HEK293T (cell line): ENCODE measurements at regions of chr9 and their contacts with region 1.

Region 1: DNA sequence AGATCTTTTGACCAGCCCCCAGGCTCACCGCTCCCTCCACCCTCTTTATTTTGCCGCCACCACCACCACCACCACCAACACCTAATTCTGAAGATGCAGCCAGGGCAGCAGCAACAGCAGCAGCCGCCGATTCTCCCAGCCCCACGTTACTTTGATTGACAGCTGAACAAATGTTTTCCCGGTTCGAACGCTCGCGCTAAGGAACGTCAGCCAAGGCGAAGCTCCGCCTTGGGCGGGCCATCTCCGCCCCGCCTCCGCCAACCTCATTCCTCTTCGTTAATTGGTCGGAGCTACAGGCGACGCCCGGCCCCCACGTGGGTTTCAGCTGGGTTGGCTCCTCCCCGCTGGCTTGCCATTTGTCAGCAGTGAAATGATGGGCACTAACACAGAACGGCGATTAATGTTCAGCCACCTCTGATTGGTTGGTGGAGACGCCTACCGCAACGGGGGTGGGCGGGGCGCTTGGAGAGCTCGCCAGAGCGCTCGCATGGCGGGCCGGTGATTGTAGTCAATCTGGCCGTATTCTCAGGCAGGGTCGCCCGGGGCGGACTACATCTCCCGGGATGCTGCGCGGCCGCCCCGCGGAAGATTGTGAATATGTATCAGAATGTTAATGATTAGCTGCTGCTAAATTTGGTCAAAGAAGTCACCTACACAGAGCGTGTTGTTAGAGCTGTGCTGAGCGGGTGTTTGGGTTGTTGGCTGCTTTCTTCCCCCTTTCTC is at the start of gene TLE4:
- DNase-seq: peak; percentile 100

Region 2: DNA sequence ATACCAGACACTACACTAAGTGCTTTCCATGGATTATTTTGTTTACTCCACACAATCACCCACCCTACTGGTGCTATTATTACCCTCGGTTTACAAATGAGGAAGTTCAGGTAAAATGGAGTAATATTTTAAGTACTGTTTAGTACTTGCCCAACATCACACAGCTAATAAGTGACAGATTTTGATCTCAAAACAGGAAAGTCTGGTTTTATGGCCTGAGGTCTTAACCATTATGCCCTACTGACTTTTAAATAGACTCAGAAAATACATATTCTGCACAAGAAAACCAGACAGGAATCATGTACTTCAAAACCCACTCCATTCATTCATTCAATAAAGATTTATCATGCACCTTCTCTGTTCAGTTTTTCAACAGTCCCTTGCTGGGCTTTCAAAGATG is 430.7 kb before region 1 on chr9:
- CTCF ChIA-PET with region 1: no interaction called
- POLR2A ChIA-PET with region 1: no interaction called
- DNase-seq: no peak

Region 3: DNA sequence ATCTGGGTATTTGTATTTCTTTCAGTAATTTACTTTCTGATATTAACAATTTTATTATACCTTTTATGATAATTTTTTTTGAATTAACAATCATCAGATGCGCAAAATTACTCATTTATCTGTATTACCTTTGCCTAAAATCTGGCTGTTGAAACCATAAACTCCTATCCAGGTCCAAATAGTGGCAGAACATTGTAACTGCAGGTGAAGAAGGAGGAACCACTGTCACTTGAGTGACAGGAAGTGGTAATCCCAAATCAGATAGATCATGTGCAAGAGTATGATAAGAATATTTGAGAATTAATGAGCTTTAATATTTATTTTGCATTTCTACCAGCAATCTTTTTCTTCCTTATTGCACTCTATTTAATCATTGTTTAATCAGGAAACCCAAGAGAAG is 139.0 kb before region 1 on chr9:
- CTCF ChIA-PET with region 1: interaction called, 3 read pairs
- POLR2A ChIA-PET with region 1: interaction called, 17 read pairs
- DNase-seq: peak; percentile 64

Region 4: GRCh38 chr9:79501566-79501965 is 69.9 kb before region 1 on chr9:
- CTCF ChIA-PET with region 1: no interaction called
- POLR2A ChIA-PET with region 1: no interaction called
- DNase-seq: no peak

Region 5: DNA sequence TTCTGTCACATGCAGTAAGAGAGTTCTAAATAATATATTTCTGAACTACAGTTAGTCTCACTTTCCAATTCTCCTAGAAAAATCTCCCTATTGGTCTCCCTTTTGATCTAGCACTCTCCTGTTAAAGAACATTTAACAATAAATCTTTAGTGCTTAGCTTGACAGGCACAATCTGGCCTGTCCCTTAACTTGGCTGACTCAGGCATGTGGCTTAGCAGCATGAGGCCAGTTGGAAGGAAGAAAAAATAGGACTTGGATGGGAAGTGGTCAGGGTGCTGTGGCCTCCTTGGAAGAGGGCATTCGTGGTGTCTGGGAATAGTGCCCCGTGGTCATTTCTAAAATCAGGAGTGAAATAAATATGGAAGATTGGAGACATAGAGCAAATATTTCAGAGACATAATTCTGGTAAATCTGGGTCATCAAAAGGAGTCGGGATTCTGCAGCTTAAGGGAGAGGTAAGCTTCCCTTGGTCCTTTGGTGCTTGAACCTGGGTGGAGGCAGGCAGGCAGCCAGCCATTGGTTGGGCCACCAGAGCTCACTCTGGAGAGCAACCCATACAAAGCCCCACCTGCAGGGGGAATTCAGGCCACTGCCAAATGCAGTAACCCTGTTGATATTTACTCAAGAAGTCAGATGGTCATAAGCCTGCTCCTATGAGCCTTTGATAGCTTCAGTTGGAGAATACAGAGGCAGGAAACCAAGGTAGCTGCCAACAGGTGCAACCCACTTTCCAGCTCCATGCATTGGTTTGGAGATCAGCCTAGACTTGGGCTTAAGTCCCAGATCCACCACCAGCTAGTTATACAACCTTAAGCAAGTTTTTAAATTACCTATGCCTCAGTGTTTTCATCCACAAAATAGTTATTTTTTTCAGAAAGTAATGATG is 28.5 kb before region 1 on chr9:
- CTCF ChIA-PET with region 1: no interaction called
- POLR2A ChIA-PET with region 1: interaction called, 11 read pairs
- DNase-seq: no peak

Region 6: GRCh38 chr9:79603222-79603920 is 31.9 kb after region 1 on chr9:
- CTCF ChIA-PET with region 1: no interaction called
- POLR2A ChIA-PET with region 1: interaction called, 13 read pairs
- DNase-seq: no peak

Region 7: DNA sequence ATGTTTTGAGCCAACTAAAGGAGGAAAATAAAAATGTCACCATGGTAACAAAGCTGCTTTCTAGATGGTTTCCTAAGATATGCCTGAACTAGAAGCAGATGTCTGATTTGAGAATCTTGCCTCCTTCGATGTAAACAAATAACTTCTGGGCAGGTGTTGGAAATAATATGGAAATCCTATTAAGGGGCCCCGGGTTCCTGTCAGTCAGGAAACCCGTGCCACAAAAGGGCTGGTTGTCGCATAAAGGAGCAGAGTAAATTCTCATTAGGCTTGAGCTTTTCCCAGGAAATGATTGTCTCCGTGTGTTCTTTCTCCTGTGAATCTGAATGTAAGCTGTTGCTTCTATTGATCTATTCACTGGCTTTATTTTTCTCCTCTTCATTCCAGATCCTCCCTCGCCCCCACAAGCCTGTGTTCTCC is 91.1 kb after region 1 on chr9:
- CTCF ChIA-PET with region 1: interaction called, 4 read pairs
- POLR2A ChIA-PET with region 1: interaction called, 41 read pairs
- DNase-seq: no peak

Region 8: DNA sequence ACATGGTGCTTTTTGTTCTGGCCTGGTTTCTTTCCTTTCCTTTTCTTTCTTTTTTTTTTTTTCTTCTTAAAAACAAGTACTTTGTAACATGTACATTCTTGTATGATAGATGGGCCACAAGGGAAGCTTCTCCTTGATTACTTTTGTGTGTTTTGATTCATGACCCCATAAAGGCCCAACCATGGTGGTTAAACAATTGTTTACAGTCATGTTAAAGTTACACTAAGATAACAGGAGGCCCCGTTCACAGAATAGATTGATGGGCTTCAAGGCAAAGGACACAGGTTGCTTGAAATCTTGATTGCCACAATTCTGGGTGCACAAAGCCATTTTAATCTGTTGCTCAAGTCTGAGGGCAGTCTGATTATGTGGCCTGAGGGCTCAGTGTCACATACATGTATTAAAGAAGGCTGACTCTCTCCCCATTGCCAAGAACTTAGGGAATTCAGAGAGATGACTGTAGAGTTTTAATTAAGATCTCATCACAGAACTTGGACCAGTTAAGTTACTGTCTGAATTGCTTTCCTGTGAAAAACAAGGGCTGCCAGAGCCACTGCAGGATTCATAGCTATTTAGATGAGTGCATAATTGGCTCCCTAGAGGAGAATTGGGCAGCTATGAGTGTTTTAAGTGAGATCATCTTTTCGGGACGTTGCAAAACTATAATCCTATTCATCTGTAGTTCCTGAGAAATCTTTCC is 163.7 kb after region 1 on chr9:
- CTCF ChIA-PET with region 1: no interaction called
- POLR2A ChIA-PET with region 1: interaction called, 10 read pairs
- DNase-seq: no peak